ENCODE measurements at regions of chr14 and their contacts with region 1.

Region 1: GRCh38 chr14:49585803-49586672 is at the start of gene RPS29:
- DNase-seq: peak; percentile 99
- H3K4me3 Mint-ChIP-seq: peak within 1 kb of the TSS; percentile 87
- H3K27ac Mint-ChIP-seq: peak within 1 kb of the TSS; percentile 93
- H3K4me1 Mint-ChIP-seq: peaks cover 46% of the 10 kb centered on the region
- H3K27me3 Mint-ChIP-seq: peaks cover 4% of the 10 kb centered on the region
- total RNA-seq, gene RPS29: 2,029 to 2,157 TPM

Region 2: GRCh38 chr14:49461529-49462401 is 124.3 kb before region 1 on chr14:
- CTCF ChIA-PET with region 1: interaction called, 29 read pairs
- POLR2A ChIA-PET with region 1: no interaction called
- intact Hi-C with region 1: loop called (anchors 2 kb)
- DNase-seq: peak; percentile 46
- H3K4me3 Mint-ChIP-seq: no peak overlapping the region
- H3K27ac Mint-ChIP-seq: no peak overlapping the region
- H3K4me1 Mint-ChIP-seq: no peaks in the 10 kb centered on the region
- H3K27me3 Mint-ChIP-seq: no peaks in the 10 kb centered on the region

Region 3: GRCh38 chr14:49620182-49621113 is 34.4 kb after region 1 on chr14 and contains the starts of genes MGAT2 and RPL36AL:
- CTCF ChIA-PET with region 1: interaction called, 36 read pairs
- POLR2A ChIA-PET with region 1: interaction called, 74 read pairs
- intact Hi-C with region 1: loop called (anchors 1 kb)
- DNase-seq: peak; percentile 98
- H3K4me3 Mint-ChIP-seq: peak within 1 kb of the TSS; percentile 96
- H3K27ac Mint-ChIP-seq: peak within 1 kb of the TSS; percentile 96
- H3K4me1 Mint-ChIP-seq: peaks cover 39% of the 10 kb centered on the region
- H3K27me3 Mint-ChIP-seq: no peaks in the 10 kb centered on the region
- total RNA-seq, gene MGAT2: 40.4 to 43.7 TPM
- total RNA-seq, gene RPL36AL: 314 to 320 TPM

Region 4: DNA sequence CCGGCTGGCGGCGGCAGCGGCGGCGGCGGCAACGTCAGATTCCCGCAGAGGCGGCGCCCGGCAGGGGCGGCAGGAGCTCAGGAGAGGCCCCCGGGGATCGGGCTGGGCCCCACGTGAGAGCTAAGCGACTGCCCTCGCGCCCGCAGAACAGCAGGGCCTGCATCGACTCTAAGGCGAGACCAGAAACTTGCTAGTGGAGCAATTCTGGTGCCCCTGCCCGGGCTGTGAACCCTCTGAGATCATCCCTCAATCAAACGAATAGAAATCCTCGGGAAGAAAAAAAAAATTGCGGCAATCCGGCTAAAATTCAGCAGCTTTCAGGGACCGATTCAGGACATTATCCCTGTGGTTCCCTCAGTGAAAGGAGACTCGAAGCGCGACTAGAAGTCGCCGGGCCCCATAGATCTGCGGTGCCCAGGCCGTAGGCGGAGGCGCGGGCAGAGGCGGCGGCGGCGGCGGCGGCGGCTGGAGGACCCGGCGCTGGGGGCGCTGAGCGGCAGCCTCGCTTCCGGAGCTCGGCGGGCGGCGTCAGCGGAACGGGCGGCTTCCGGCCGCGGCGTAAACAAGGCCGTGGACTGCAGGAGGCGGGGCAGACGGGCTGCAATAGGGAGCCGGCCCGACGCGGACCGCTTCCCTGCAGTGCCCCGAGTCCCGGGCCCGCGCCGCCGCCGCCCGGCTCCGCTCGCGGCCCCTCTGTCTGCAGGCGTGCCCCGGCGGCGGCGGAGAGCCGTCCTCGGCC is 181.7 kb after region 1 on chr14 and contains the start of gene KLHDC2:
- CTCF ChIA-PET with region 1: interaction called, 3 read pairs
- POLR2A ChIA-PET with region 1: interaction called, 8 read pairs
- intact Hi-C with region 1: loop called (anchors 1 kb)
- DNase-seq: peak; percentile 94
- H3K4me3 Mint-ChIP-seq: peak within 1 kb of the TSS; percentile 88
- H3K27ac Mint-ChIP-seq: peak within 1 kb of the TSS; percentile 100
- H3K4me1 Mint-ChIP-seq: peaks cover 28% of the 10 kb centered on the region
- H3K27me3 Mint-ChIP-seq: no peaks in the 10 kb centered on the region
- total RNA-seq, gene KLHDC2: 27.8 to 28.2 TPM

Region 5: GRCh38 chr14:50231475-50232275 is 645.6 kb after region 1 on chr14 and contains the start of gene SOS2:
- CTCF ChIA-PET with region 1: no interaction called
- POLR2A ChIA-PET with region 1: no interaction called
- intact Hi-C with region 1: loop called (anchors 5 kb)
- DNase-seq: peak; percentile 86
- H3K4me3 Mint-ChIP-seq: peak within 1 kb of the TSS; percentile 78
- H3K27ac Mint-ChIP-seq: peak within 1 kb of the TSS; percentile 85
- H3K4me1 Mint-ChIP-seq: peaks cover 40% of the 10 kb centered on the region
- H3K27me3 Mint-ChIP-seq: no peaks in the 10 kb centered on the region
- total RNA-seq, gene SOS2: 19.6 to 20.9 TPM

Region 6: GRCh38 chr14:50520947-50521815 is 935.1 kb after region 1 on chr14:
- CTCF ChIA-PET with region 1: no interaction called
- POLR2A ChIA-PET with region 1: no interaction called
- intact Hi-C with region 1: loop called (anchors 5 kb)
- DNase-seq: peak; percentile 84
- H3K4me3 Mint-ChIP-seq: peak overlapping the region; percentile 25
- H3K27ac Mint-ChIP-seq: peak overlapping the region; percentile 85
- H3K4me1 Mint-ChIP-seq: peaks cover 56% of the 10 kb centered on the region
- H3K27me3 Mint-ChIP-seq: no peaks in the 10 kb centered on the region

Measured in activated CD4-positive, alpha-beta memory T cell treated with anti-CD3 and anti-CD28 coated beads for 36 hours (primary cell).